ENCODE measurements at regions of chr6 and their contacts with region 1.

Region 1: DNA sequence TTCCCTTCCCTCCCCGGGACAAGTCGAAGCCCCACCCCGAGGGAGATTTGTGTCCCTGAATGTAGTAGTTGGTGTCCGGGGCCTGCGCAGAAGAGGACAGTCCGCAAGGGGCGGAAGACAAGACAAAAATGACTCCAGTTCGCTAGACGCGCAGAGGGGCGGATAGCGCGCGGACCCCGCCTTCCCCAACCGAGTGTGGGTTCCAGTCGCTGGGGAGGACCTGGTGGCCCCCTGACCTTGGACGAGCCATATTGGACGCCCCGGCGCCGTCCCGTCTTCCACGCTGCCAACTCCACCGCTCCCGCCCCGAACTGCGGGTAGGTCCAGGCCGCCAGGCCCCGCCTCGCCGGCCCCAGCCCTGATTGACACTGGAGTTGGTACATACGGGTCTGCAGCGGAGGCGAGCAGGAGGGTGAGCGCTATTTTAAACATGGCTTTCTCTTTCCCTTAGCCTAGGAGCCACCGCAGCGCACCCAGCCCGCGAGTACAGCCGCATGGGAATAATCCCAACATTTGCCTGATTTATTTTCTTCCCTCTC is 802 bp downstream of the HMGN3 start:
- DNase-seq: peak; percentile 87
- H3K4me3 Mint-ChIP-seq: peak overlapping the region; percentile 89
- H3K27ac Mint-ChIP-seq: peak overlapping the region; percentile 78
- H3K4me1 Mint-ChIP-seq: peaks cover 54% of the 10 kb centered on the region
- H3K27me3 Mint-ChIP-seq: no peaks in the 10 kb centered on the region
- CTCF ChIP-seq: peak; percentile 14

Region 2: GRCh38 chr6:79078075-79079025 is 155.3 kb before region 1 on chr6 and contains the start of gene PHIP:
- CTCF ChIA-PET with region 1: interaction called, 3 read pairs
- intact Hi-C with region 1: loop called (anchors 2 kb)
- DNase-seq: peak; percentile 92
- H3K4me3 Mint-ChIP-seq: peak within 1 kb of the TSS; percentile 92
- H3K27ac Mint-ChIP-seq: peak within 1 kb of the TSS; percentile 92
- H3K4me1 Mint-ChIP-seq: no peaks in the 10 kb centered on the region
- H3K27me3 Mint-ChIP-seq: no peaks in the 10 kb centered on the region
- CTCF ChIP-seq: no peak
- total RNA-seq, gene PHIP: 43.3 and 50.8 TPM in 2 replicates

Region 3: DNA sequence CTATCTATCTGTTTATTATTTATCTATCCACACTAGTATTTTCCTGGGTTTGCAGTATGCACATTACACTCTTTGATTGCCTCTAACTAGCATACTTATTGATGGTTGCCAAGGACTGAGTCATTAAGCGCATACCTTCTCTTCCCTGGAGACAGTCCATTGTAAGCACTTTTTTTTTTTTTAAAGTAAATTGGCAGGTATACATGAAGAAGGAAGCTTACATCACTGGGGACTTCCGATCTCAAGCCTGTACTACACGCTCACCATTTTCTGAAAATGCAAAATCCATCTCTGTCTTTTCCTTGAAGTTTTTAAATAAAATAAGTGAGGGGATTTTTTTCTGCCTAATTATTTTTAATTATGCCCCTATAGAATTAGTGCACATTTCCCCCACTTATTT is 62.7 kb before region 1 on chr6:
- CTCF ChIA-PET with region 1: no interaction called
- intact Hi-C with region 1: loop called (anchors 2 kb)
- DNase-seq: no peak
- H3K4me3 Mint-ChIP-seq: no peak overlapping the region
- H3K27ac Mint-ChIP-seq: peak overlapping the region; percentile 19
- H3K4me1 Mint-ChIP-seq: peaks cover 27% of the 10 kb centered on the region
- H3K27me3 Mint-ChIP-seq: no peaks in the 10 kb centered on the region
- CTCF ChIP-seq: no peak

Region 4: DNA sequence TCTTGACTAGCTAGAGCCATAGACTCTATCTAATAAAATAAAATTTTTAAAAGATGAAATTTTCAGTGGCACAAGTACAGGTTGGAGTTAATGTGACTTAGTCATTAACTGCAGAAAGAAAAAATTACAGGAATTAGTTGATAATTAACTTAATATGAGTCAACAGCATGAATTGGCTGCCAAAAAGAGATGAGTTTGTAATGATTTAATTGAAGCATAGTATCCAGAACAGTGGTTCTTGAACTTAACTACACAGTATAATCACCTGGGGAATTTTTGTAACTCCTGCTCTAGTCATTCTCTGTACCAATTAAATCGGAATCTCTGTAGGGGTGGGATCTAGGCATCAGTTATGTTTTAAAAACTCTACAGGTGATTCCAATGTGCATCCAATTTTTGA is 47.1 kb after region 1 on chr6:
- CTCF ChIA-PET with region 1: no interaction called
- intact Hi-C with region 1: loop called (anchors 5 kb)
- DNase-seq: no peak
- H3K4me3 Mint-ChIP-seq: no peak overlapping the region
- H3K27ac Mint-ChIP-seq: peak overlapping the region; percentile 79
- H3K4me1 Mint-ChIP-seq: peaks cover 58% of the 10 kb centered on the region
- H3K27me3 Mint-ChIP-seq: no peaks in the 10 kb centered on the region
- CTCF ChIP-seq: no peak

Region 5: GRCh38 chr6:79302341-79302740 is 68.7 kb after region 1 on chr6:
- CTCF ChIA-PET with region 1: no interaction called
- intact Hi-C with region 1: loop called (anchors 5 kb)
- DNase-seq: peak; percentile 44
- H3K4me3 Mint-ChIP-seq: no peak overlapping the region
- H3K27ac Mint-ChIP-seq: peak overlapping the region; percentile 72
- H3K4me1 Mint-ChIP-seq: peaks cover 60% of the 10 kb centered on the region
- H3K27me3 Mint-ChIP-seq: no peaks in the 10 kb centered on the region
- CTCF ChIP-seq: no peak

Region 6: DNA sequence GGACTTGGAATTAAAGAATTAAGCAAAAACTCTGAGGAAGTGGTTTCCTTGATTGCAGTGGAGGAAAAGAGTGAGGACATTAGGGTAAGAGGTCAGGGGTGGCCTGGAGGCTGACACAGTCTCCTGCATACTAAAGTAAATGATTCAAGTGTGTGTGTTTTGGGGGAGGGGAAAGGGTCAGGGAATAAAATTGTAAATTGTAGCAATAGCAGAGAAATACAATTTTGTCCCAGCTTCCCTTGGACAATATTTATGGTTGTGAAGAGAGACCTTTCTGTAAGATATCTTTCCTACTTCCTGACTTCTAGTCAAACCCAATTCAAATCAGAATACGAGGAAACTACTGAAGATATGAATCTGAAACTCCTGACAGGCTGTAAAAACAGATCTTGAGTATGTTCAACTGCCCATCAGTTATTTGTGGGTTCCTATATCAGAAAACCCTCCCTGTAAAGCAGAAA is 144.2 kb after region 1 on chr6:
- CTCF ChIA-PET with region 1: no interaction called
- intact Hi-C with region 1: loop called (anchors 5 kb)
- DNase-seq: peak; percentile 29
- H3K4me3 Mint-ChIP-seq: peak overlapping the region; percentile 11
- H3K27ac Mint-ChIP-seq: peak overlapping the region; percentile 78
- H3K4me1 Mint-ChIP-seq: peaks cover 42% of the 10 kb centered on the region
- H3K27me3 Mint-ChIP-seq: no peaks in the 10 kb centered on the region
- CTCF ChIP-seq: no peak

Region 7: DNA sequence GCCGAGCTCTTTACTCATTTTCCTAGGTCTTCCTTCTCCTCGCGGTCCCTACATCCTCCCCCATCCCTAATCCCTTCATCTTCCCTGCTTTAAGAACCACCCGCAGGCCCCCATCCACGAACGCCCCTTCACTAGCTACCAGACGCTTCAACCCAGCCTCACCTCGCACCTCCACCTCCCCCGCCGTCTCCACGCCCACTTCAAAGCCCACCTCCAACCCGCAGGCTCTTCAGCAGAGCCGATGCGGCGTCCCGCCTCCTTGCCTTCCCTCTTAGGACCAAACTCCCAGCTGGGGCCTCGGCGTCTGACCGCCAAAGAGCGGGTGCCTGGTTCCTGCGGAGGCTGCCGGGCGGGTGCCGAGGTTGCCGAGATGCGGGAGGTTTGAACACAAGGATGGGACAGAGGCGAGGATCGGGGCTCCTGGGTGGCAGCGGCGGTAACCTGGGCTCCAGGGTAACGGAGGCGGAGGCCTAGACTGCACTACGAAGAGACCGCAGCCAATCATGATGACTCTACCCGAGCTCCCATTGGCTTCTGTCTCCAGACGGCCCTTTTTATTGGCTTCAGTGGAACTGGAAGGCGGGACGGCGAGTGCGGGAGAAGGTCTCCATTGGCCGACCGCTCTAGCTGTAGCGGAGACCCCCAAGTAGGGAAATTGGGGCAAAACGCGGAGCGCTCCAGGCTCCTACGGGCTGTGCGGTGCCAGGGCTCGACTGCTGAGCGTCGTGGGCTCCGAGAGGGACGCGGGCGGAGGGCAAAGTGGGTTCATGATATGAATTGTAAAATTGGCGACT is 303.5 kb after region 1 on chr6 and contains the start of gene LCA5:
- CTCF ChIA-PET with region 1: interaction called, 3 read pairs
- intact Hi-C with region 1: loop called (anchors 5 kb)
- DNase-seq: peak; percentile 92
- H3K4me3 Mint-ChIP-seq: no peak within 1 kb of the TSS
- H3K27ac Mint-ChIP-seq: no peak within 1 kb of the TSS
- H3K4me1 Mint-ChIP-seq: peaks cover 45% of the 10 kb centered on the region
- H3K27me3 Mint-ChIP-seq: no peaks in the 10 kb centered on the region
- CTCF ChIP-seq: no peak
- total RNA-seq, gene LCA5: 13.9 and 18.3 TPM in 2 replicates

Measured in Calu3 (cell line).